GM12878 (cell line): ENCODE measurements at regions of chr7 and their contacts with region 1.

Region 1: DNA sequence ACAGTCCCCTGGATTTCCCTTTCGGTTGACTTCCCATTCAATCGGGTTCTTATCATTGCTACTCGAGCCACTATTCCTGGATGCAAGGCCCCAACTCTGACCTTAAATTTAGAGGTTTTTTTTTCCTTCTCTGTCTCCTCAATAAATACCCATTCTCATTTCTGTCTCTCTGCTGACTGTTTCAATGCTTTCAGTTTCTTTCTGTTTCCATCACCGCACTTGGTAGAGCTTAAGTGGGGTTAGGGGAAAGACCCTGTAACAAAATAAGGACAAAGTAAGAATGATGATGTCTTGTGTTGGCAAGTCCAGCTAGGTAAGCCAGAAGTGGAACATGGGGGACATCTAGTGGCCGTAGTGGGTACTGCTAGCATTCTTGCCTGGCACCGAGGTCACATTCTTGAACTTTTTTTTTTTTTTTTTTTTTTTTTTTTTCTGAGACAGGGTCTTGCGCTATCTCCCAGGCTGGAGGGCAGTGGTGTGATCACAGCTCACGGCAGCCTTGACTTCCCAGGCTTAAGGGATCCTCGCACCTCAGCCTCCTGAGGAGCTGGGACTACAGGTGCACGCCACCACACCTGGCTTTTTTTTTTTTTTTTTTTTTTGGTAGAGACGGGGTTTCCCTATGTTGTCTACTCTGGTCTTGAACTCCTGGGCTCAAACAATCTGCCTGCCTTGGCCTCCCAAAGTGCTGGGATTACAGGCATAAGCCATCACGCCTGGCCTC is 40.3 kb downstream of the ZC3HC1 start:
- DNase-seq: peak; percentile 92
- ATAC-seq: peak; percentile 90
- H3K4me3 ChIP-seq: no peak overlapping the region
- H3K27ac ChIP-seq: peak overlapping the region; percentile 61
- H3K4me1 ChIP-seq: peaks cover 27% of the 10 kb centered on the region
- H3K27me3 ChIP-seq: no peaks in the 10 kb centered on the region
- CTCF ChIP-seq: peak; percentile 92 to 96 (median 94)
- EP300 ChIP-seq: no peak
- POLR2A ChIP-seq: no peak
- RAD21 ChIP-seq: peak; percentile 98

Region 2: DNA sequence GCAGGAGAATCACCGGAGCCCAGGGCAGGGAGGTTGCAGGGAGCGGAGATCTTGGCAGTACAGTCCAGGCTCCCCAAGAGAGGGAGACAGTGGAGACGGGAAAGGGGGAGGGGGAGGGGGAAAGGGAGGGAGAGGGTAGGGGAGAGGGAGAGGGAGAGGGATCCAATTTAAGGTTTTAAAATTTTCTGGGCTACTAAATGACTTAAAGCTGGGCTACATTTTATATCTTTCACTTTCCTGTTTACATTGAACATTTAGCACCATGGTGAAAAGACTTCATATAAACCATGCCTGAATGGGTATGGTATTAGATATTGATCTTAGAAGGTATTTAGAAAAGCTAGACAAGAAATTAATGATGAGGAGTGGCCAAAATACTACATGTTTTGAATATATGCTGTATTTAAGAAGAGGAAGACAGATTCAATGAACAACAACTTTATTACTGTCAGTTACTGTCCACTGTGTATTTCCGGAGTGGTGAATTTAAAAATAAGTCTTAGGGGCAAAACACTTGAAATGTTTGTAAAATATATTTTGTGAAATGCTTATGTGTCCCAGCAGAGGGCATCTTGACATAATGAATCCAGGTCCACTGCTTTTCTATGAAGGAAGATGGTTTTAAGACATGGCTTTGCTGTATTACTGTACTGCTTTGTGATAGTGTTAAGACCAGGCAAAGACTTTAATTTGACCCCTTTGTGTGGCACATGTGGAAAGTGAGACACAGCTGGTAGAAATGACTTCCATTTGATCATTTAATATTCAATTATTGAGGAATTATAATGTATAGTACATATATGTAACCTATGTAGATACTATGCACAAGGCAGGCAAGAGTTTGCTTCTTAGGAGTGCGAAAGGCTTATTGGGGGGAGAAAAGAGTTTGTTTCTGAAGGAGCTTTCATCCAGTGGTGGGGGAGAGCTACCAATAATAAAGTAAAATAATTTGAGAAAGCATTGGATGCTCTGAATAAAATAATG is 346.5 kb before region 1 on chr7:
- CTCF ChIA-PET with region 1: interaction called, 36 read pairs
- POLR2A ChIA-PET with region 1: no interaction called
- RAD21 ChIA-PET with region 1: interaction called, 4 read pairs
- SMC1A ChIA-PET with region 1: interaction called, 6 read pairs
- in situ Hi-C with region 1: loop called (anchors 5 kb)
- intact Hi-C with region 1: loop called (anchors 1 kb)
- DNase-seq: peak; percentile 11
- ATAC-seq: peak; percentile 55
- H3K4me3 ChIP-seq: no peak overlapping the region
- H3K27ac ChIP-seq: no peak overlapping the region
- H3K4me1 ChIP-seq: no peaks in the 10 kb centered on the region
- H3K27me3 ChIP-seq: no peaks in the 10 kb centered on the region
- CTCF ChIP-seq: peak; percentile 18 to 56 (median 46); a peak in 4 of 6 replicates
- EP300 ChIP-seq: no peak
- POLR2A ChIP-seq: no peak
- RAD21 ChIP-seq: peak; percentile 78

Region 3: GRCh38 chr7:129825496-129826267 is 185.2 kb before region 1 on chr7:
- CTCF ChIA-PET with region 1: interaction called, 107 read pairs
- POLR2A ChIA-PET with region 1: interaction called, 4 read pairs
- RAD21 ChIA-PET with region 1: interaction called, 36 read pairs
- SMC1A ChIA-PET with region 1: interaction called, 53 read pairs
- in situ Hi-C with region 1: loop called (anchors 5 kb)
- intact Hi-C with region 1: loop called (anchors 1 kb)
- DNase-seq: no peak
- ATAC-seq: peak; percentile 88
- H3K4me3 ChIP-seq: peak overlapping the region; percentile 79
- H3K27ac ChIP-seq: no peak overlapping the region
- H3K4me1 ChIP-seq: peaks cover 4% of the 10 kb centered on the region
- H3K27me3 ChIP-seq: no peaks in the 10 kb centered on the region
- CTCF ChIP-seq: peak; percentile 37 to 72 (median 70); a peak in 4 of 6 replicates
- EP300 ChIP-seq: no peak
- POLR2A ChIP-seq: peak; percentile 61; the same call in 1 of the 2 replicates
- RAD21 ChIP-seq: peak; percentile 77

Region 4: GRCh38 chr7:129840757-129841156 is 170.1 kb before region 1 on chr7:
- CTCF ChIA-PET with region 1: interaction called, 13 read pairs
- POLR2A ChIA-PET with region 1: interaction called, 5 read pairs
- RAD21 ChIA-PET with region 1: interaction called, 5 read pairs
- SMC1A ChIA-PET with region 1: interaction called, 12 read pairs
- in situ Hi-C with region 1: no loop called
- intact Hi-C with region 1: no loop called
- DNase-seq: no peak
- ATAC-seq: no peak
- H3K4me3 ChIP-seq: no peak overlapping the region
- H3K27ac ChIP-seq: no peak overlapping the region
- H3K4me1 ChIP-seq: peaks cover 8% of the 10 kb centered on the region; the same call in 1 of the 2 replicates
- H3K27me3 ChIP-seq: no peaks in the 10 kb centered on the region
- CTCF ChIP-seq: no peak
- EP300 ChIP-seq: no peak
- POLR2A ChIP-seq: no peak
- RAD21 ChIP-seq: no peak

Region 5: GRCh38 chr7:129933627-129934026 is 77.2 kb before region 1 on chr7:
- CTCF ChIA-PET with region 1: interaction called, 44 read pairs
- POLR2A ChIA-PET with region 1: interaction called, 6 read pairs
- RAD21 ChIA-PET with region 1: interaction called, 34 read pairs
- SMC1A ChIA-PET with region 1: interaction called, 28 read pairs
- in situ Hi-C with region 1: no loop called
- intact Hi-C with region 1: no loop called
- DNase-seq: no peak
- ATAC-seq: peak; percentile 27; the same call in 1 of the 3 replicates
- H3K4me3 ChIP-seq: 0 out of 2 replicates have a peak overlapping the region, but pooled peaks have one; percentile 12
- H3K27ac ChIP-seq: no peak overlapping the region; the same call in 1 of the 2 replicates
- H3K4me1 ChIP-seq: peaks cover 10% of the 10 kb centered on the region
- H3K27me3 ChIP-seq: no peaks in the 10 kb centered on the region
- CTCF ChIP-seq: no peak
- EP300 ChIP-seq: no peak
- POLR2A ChIP-seq: no peak
- RAD21 ChIP-seq: no peak

Region 6: GRCh38 chr7:129958643-129959470 is 52.0 kb before region 1 on chr7:
- CTCF ChIA-PET with region 1: interaction called, 3 read pairs
- POLR2A ChIA-PET with region 1: no interaction called
- RAD21 ChIA-PET with region 1: interaction called, 11 read pairs
- SMC1A ChIA-PET with region 1: interaction called, 57 read pairs
- in situ Hi-C with region 1: no loop called
- intact Hi-C with region 1: no loop called
- DNase-seq: no peak
- ATAC-seq: peak; percentile 38; the same call in 2 of the 3 replicates
- H3K4me3 ChIP-seq: no peak overlapping the region
- H3K27ac ChIP-seq: no peak overlapping the region
- H3K4me1 ChIP-seq: no peaks in the 10 kb centered on the region
- H3K27me3 ChIP-seq: no peaks in the 10 kb centered on the region
- CTCF ChIP-seq: no peak
- EP300 ChIP-seq: no peak
- POLR2A ChIP-seq: no peak
- RAD21 ChIP-seq: no peak